A549 (cell line): ENCODE measurements at regions of chr11 and their contacts with region 1.

Region 1: DNA sequence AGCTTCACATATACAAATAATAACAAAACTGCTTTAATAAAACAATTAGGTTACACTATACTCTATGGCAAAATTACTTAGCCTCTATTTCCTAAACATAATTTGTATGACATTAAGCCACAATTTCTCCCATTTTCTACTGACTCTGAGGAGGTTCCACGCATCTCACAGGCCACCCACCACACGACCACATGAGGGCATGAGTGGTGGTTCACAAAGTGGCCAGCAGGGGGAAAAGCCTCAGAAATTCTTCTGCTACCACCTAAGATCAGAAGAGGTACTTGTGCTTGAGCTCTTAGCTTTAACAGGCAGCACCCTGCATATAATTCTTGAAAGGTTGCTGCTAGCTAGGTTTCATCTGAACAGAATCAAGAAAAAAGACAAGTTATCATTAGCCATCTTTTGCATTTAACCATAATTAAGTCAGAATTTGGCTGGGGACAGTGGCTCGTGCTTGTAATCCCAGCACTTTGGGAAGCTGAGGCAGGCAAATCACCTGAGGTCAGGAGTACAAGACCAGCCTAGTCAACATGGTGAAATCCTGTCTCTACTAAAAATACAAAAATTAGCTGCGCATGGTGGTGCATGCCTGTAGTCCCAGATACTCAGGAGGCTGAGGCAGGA is 7.7 kb downstream of the LPXN start:
- DNase-seq: peak; percentile 44 to 68
- ATAC-seq: peak; percentile 99
- H3K4me3 ChIP-seq: no peak overlapping the region
- H3K27ac ChIP-seq: no peak overlapping the region
- H3K4me1 ChIP-seq: peaks cover 11% of the 10 kb centered on the region; the same call in 2 of the 3 replicates
- CTCF ChIP-seq: peak; percentile 62
- EP300 ChIP-seq: no peak
- POLR2A ChIP-seq: no peak
- RAD21 ChIP-seq: peak in 1 of 2 experiments; percentile 28; a peak in 2 of 5 replicates

Region 2: DNA sequence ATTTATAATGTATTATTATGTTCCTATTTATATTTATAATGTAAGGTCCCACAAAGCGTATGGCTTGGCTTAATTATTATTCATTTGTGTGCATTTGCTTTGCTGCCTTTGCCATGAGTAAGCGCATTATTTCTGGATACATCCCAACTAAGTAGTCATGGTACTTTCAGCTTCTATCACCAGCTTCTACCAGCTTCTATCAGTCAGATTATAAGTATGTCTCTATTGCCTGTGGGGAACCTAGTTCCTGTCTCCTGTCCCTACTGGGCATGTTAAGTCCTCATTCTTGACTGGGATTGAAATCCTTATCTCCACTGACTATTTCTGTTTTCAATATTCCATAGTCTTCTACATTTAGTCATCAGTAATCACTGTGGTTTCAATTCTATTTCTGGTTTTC is 266.4 kb before region 1 on chr11:
- CTCF ChIA-PET with region 1: no interaction called
- POLR2A ChIA-PET with region 1: no interaction called
- DNase-seq: no peak
- ATAC-seq: no peak
- H3K4me3 ChIP-seq: no peak overlapping the region
- H3K27ac ChIP-seq: no peak overlapping the region
- H3K4me1 ChIP-seq: no peaks in the 10 kb centered on the region
- CTCF ChIP-seq: no peak
- EP300 ChIP-seq: no peak
- POLR2A ChIP-seq: no peak
- RAD21 ChIP-seq: no peak

Region 3: DNA sequence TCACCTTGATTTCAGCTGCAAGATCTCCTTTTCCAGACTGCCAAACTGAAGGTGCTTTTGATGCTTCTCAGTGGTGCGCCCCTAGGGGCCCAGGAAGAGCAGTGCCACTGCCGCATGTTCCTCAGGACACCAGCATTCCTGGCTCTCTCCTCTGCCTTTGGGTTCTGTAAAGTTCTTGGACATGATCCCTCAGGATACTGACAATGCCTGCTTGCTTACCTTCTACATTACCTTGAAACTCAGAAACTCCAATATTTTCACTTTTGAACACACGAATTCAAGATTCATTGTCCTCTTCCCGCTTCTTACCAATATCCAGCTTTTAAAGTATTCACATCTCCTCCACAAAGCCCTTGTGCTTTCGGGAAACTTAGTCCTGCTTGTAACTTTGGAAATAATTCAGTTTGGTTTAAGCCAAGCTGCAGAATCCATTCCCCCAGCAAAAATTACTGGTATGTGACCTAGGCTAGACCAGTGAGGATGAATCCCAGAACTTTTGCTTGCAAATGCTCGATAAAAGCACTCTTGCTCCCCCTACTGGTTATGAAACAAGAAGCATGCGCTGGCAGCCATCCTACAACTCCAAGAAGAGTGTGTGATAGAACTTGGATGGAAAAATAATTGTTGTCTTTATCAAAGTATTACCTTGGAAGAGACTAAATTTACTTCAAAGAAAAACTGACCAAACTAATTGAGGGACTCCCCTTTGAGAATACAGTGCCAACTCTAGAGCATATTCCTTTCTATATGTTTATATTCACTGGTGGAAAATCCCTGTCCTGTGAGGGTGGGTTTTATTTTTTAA is 43.6 kb before region 1 on chr11:
- CTCF ChIA-PET with region 1: interaction called, 11 read pairs
- POLR2A ChIA-PET with region 1: no interaction called
- DNase-seq: peak; percentile 71 to 85
- ATAC-seq: peak; percentile 98 to 99
- H3K4me3 ChIP-seq: peak overlapping the region; percentile 19; the same call in 1 of the 3 replicates
- H3K27ac ChIP-seq: peak overlapping the region in 1 of 2 experiments; percentile 30; a peak in 1 of 6 replicates
- H3K4me1 ChIP-seq: 0 out of 3 replicates have a peak, but pooled peaks cover 3% of the 10 kb centered on the region
- CTCF ChIP-seq: peak; percentile 77
- EP300 ChIP-seq: no peak
- POLR2A ChIP-seq: no peak
- RAD21 ChIP-seq: peak; percentile 64 to 70

Region 4: GRCh38 chr11:58549644-58550043 is 18.4 kb before region 1 on chr11:
- CTCF ChIA-PET with region 1: interaction called, 15 read pairs
- POLR2A ChIA-PET with region 1: no interaction called
- DNase-seq: no peak
- ATAC-seq: no peak
- H3K4me3 ChIP-seq: no peak overlapping the region
- H3K27ac ChIP-seq: no peak overlapping the region
- H3K4me1 ChIP-seq: no peaks in the 10 kb centered on the region
- CTCF ChIP-seq: no peak
- EP300 ChIP-seq: no peak
- POLR2A ChIP-seq: no peak
- RAD21 ChIP-seq: no peak

Region 5: GRCh38 chr11:58609723-58610122 is 41.7 kb after region 1 on chr11:
- CTCF ChIA-PET with region 1: interaction called, 10 read pairs
- POLR2A ChIA-PET with region 1: no interaction called
- DNase-seq: no peak
- ATAC-seq: no peak
- H3K4me3 ChIP-seq: no peak overlapping the region
- H3K27ac ChIP-seq: no peak overlapping the region
- H3K4me1 ChIP-seq: peaks cover 17% of the 10 kb centered on the region; the same call in 2 of the 3 replicates
- CTCF ChIP-seq: no peak
- EP300 ChIP-seq: no peak
- POLR2A ChIP-seq: no peak
- RAD21 ChIP-seq: no peak

Region 6: GRCh38 chr11:58654079-58654907 is 86.3 kb after region 1 on chr11:
- CTCF ChIA-PET with region 1: no interaction called
- POLR2A ChIA-PET with region 1: no interaction called
- DNase-seq: peak; percentile 67 to 77
- ATAC-seq: peak; percentile 98 to 100
- H3K4me3 ChIP-seq: no peak overlapping the region
- H3K27ac ChIP-seq: no peak overlapping the region
- H3K4me1 ChIP-seq: peaks cover 4% of the 10 kb centered on the region; the same call in 1 of the 3 replicates
- CTCF ChIP-seq: peak; percentile 87
- EP300 ChIP-seq: no peak
- POLR2A ChIP-seq: no peak
- RAD21 ChIP-seq: peak; percentile 71 to 72